ENCODE measurements at regions of chr9 and their contacts with region 1.

Region 1: GRCh38 chr9:34591248-34591916 is 1.9 kb upstream of the CNTFR start:
- DNase-seq: peak; percentile 97

Region 2: GRCh38 chr9:34500623-34501267 is 90.6 kb before region 1 on chr9:
- intact Hi-C with region 1: loop called in 1 of 2 experiments (anchors 5 kb)
- DNase-seq: no peak

Measured in posterior vena cava (tissue), 2 donors.